Activated B cell treated with CpG ODN at 0.5 μM for 24 hours (primary cell): ENCODE measurements at regions of chr1 and their contacts with region 1.

Region 1: GRCh38 chr1:109655601-109656519 is at the start of gene GSTM4:
- DNase-seq: peak; percentile 82
- ATAC-seq: peak; percentile 97
- H3K4me3 Mint-ChIP-seq: peak within 1 kb of the TSS; percentile 96
- H3K27ac Mint-ChIP-seq: peak within 1 kb of the TSS; percentile 94
- H3K4me1 Mint-ChIP-seq: peaks cover 24% of the 10 kb centered on the region
- H3K27me3 Mint-ChIP-seq: peaks cover 10% of the 10 kb centered on the region
- CTCF ChIP-seq: no peak
- total RNA-seq, gene GSTM4: 13.1 and 13.7 TPM in 2 replicates

Region 2: GRCh38 chr1:109493805-109494539 is 161.9 kb before region 1 on chr1 and contains the start of gene CYB561D1:
- CTCF ChIA-PET with region 1: no interaction called
- POLR2A ChIA-PET with region 1: no interaction called
- intact Hi-C with region 1: loop called (anchors 5 kb)
- DNase-seq: peak; percentile 95
- ATAC-seq: peak; percentile 89
- H3K4me3 Mint-ChIP-seq: peak within 1 kb of the TSS; percentile 98
- H3K27ac Mint-ChIP-seq: peak within 1 kb of the TSS; percentile 91
- H3K4me1 Mint-ChIP-seq: peaks cover 43% of the 10 kb centered on the region
- H3K27me3 Mint-ChIP-seq: no peaks in the 10 kb centered on the region
- CTCF ChIP-seq: peak; percentile 81
- total RNA-seq, gene CYB561D1: 17.1 and 18.1 TPM in 2 replicates

Region 3: DNA sequence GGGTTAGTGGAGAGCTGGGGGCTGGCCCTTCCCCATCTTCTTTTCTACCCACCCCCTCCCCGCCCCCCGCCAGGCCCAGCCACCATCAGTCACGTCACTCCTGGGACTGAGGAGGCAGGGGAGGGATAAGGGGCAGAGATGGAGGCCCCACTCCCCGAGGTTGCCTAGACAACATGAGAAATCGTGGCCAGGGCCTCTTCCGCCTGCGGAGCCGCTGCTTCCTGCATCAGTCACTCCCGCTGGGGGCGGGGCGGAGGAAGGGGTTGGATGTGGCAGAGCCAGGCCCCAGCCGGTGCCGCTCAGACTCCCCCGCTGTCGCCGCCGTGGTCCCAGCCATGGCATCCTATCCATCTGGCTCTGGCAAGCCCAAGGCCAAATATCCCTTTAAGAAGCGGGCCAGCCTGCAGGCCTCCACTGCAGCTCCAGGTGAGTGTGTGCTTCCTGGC is 35.0 kb before region 1 on chr1:
- CTCF ChIA-PET with region 1: no interaction called
- POLR2A ChIA-PET with region 1: interaction called, 10 read pairs
- intact Hi-C with region 1: loop called (anchors 2 kb)
- DNase-seq: peak; percentile 80
- ATAC-seq: peak; percentile 67
- H3K4me3 Mint-ChIP-seq: peak overlapping the region; percentile 90
- H3K27ac Mint-ChIP-seq: peak overlapping the region; percentile 93
- H3K4me1 Mint-ChIP-seq: peaks cover 78% of the 10 kb centered on the region
- H3K27me3 Mint-ChIP-seq: no peaks in the 10 kb centered on the region
- CTCF ChIP-seq: no peak

Region 4: GRCh38 chr1:109687616-109688499 is 32.0 kb after region 1 on chr1 and contains the start of gene GSTM1:
- CTCF ChIA-PET with region 1: no interaction called
- POLR2A ChIA-PET with region 1: interaction called, 12 read pairs
- intact Hi-C with region 1: no loop called
- DNase-seq: peak; percentile 62
- ATAC-seq: peak; percentile 98
- H3K4me3 Mint-ChIP-seq: peak within 1 kb of the TSS; percentile 89
- H3K27ac Mint-ChIP-seq: peak within 1 kb of the TSS; percentile 87
- H3K4me1 Mint-ChIP-seq: peaks cover 11% of the 10 kb centered on the region
- H3K27me3 Mint-ChIP-seq: no peaks in the 10 kb centered on the region
- CTCF ChIP-seq: no peak
- total RNA-seq, gene GSTM1: 22.2 and 22.4 TPM in 2 replicates

Region 5: DNA sequence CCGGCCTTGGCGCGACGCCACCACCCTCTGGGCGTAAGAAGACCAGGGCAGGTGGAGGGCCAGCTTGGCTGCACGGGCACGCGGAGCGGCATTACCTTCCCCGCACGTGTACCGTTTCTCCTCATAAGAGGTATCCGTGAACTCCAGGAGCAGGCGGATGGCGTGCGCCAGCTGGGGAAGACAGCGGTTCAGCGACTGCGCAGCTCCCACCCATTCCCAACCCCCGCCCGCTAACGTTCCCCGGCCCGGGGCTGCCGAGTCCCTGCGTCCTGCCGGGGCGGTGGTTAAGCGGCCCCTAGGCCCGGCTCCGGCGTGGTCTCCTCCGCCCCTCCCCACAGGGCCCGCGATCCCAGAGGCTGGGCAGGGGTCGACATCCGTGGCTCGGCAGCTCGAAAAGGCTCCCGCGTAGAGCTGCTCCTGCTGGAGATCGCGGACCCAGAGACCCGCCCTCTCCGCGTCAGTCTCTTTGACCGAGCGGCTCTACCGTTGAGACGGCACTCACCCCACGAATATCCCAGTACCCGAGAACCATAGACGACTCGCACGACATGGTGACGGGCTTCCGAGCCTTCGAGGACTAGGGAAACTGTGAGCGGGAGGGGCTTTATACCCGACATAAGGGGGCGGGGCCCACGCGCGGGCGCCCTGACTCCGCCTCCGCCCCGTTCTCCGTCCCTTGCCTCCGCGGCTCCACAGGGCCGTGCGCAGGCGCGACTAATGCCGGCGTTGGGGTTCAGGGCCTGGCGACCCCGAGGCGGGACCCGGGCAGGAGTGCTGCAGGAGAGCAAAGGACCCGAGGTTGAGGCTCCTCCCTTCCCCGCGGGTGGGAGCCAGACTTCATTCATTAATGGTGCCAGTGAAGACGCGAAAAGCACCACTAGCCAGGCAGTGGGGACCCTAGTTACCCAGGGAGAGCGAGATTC is 84.1 kb after region 1 on chr1:
- CTCF ChIA-PET with region 1: no interaction called
- POLR2A ChIA-PET with region 1: no interaction called
- intact Hi-C with region 1: loop called (anchors 5 kb)
- DNase-seq: peak; percentile 72
- ATAC-seq: peak; percentile 97
- H3K4me3 Mint-ChIP-seq: peak overlapping the region; percentile 82
- H3K27ac Mint-ChIP-seq: no peak overlapping the region
- H3K4me1 Mint-ChIP-seq: peaks cover 13% of the 10 kb centered on the region
- H3K27me3 Mint-ChIP-seq: peaks cover 24% of the 10 kb centered on the region
- CTCF ChIP-seq: no peak

Region 6: DNA sequence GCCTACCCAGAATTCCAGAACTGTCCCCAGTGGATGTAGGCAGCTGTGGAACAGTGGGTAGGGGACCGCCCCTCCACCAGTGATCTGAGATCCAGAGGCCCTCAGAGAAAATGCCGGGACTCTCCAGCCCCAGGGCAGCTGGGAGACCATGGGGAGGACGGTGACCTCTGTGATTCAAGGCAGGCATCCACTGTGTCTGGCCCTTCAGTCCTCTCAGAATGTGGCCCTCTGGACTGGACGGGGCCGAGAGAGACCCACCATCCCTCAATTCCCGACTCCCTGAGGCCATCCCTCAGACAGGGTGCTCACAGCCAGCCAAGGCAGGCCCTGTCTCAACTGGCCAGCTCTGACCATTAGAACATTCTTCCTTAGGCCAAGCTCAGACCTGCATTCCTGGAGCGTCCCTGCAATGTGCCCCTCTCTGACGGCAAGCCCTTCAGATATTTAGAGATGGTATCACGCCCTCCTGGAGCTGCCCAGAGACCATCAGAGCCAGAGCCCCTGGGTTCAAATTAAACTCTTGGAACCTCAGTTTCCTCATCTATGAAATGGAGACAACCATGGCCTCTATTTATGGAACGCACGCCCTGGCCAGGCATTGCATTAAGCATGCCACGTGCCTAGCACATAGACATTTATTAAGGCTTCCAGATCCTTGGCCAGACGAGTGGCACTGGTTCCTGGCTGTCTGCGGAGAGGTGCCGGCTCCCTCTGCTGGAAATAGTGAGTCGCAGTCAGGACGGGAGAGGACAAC is 117.5 kb after region 1 on chr1:
- CTCF ChIA-PET with region 1: interaction called, 6 read pairs
- POLR2A ChIA-PET with region 1: no interaction called
- intact Hi-C with region 1: loop called (anchors 5 kb)
- DNase-seq: peak; percentile 37
- ATAC-seq: peak; percentile 81
- H3K4me3 Mint-ChIP-seq: no peak overlapping the region
- H3K27ac Mint-ChIP-seq: no peak overlapping the region
- H3K4me1 Mint-ChIP-seq: peaks cover 3% of the 10 kb centered on the region
- H3K27me3 Mint-ChIP-seq: peaks cover 12% of the 10 kb centered on the region
- CTCF ChIP-seq: no peak

Region 7: GRCh38 chr1:109910123-109910962 is 254.5 kb after region 1 on chr1 and contains the start of gene CSF1:
- CTCF ChIA-PET with region 1: no interaction called
- POLR2A ChIA-PET with region 1: no interaction called
- intact Hi-C with region 1: no loop called
- DNase-seq: peak; percentile 40
- ATAC-seq: peak; percentile 23
- H3K4me3 Mint-ChIP-seq: peak within 1 kb of the TSS; percentile 85
- H3K27ac Mint-ChIP-seq: peak within 1 kb of the TSS; percentile 51
- H3K4me1 Mint-ChIP-seq: peaks cover 37% of the 10 kb centered on the region
- H3K27me3 Mint-ChIP-seq: peaks cover 38% of the 10 kb centered on the region
- CTCF ChIP-seq: no peak
- total RNA-seq, gene CSF1: 1.9 and 2.0 TPM in 2 replicates